ENCODE measurements at regions of chr9 and their contacts with region 1.

Region 1: DNA sequence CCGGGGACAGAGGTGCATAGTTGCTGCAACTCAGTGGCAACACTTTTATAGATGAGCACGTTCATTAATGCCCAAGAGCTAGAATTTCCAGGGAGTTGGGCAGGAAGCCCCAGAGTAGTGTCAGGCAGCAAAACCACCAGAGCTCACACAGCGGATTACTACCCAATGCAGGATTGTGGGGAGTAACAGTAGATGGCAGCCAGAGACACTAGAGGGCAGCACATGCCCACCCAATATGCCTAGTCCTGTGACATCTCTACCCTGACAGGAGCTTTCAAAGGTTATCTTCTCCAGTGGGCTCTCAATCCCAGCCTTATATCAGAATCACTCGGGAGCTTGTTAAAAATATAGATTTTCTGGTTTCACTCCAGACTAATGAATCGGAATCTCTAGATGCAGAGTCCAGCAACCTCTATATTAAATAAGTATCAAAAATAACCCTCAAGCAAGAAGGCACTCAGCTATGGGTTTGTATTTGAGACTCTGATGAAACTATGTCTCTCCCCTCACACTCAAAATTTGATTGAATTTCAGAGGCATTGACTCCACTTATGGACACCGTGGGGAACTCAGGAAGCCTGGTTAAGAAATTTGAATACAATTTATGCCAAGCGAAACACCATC is 58.4 kb upstream of the PHF24 start:
- DNase-seq: peak; percentile 76 to 79
- H3K4me3 ChIP-seq: no peak overlapping the region
- H3K27ac ChIP-seq: no peak overlapping the region
- H3K4me1 ChIP-seq: no peaks in the 10 kb centered on the region
- H3K27me3 ChIP-seq: no peaks in the 10 kb centered on the region
- CTCF ChIP-seq: peak; percentile 26 to 85 (median 75)
- POLR2A ChIP-seq: no peak

Region 2: GRCh38 chr9:34463098-34463900 is 436.3 kb before region 1 on chr9:
- intact Hi-C with region 1: no loop called
- DNase-seq: no peak
- H3K4me3 ChIP-seq: no peak overlapping the region
- H3K27ac ChIP-seq: no peak overlapping the region
- H3K4me1 ChIP-seq: peaks cover 0 to 3% of the 10 kb centered on the region in 2 donors
- H3K27me3 ChIP-seq: no peaks in the 10 kb centered on the region
- CTCF ChIP-seq: no peak
- POLR2A ChIP-seq: no peak

Region 3: DNA sequence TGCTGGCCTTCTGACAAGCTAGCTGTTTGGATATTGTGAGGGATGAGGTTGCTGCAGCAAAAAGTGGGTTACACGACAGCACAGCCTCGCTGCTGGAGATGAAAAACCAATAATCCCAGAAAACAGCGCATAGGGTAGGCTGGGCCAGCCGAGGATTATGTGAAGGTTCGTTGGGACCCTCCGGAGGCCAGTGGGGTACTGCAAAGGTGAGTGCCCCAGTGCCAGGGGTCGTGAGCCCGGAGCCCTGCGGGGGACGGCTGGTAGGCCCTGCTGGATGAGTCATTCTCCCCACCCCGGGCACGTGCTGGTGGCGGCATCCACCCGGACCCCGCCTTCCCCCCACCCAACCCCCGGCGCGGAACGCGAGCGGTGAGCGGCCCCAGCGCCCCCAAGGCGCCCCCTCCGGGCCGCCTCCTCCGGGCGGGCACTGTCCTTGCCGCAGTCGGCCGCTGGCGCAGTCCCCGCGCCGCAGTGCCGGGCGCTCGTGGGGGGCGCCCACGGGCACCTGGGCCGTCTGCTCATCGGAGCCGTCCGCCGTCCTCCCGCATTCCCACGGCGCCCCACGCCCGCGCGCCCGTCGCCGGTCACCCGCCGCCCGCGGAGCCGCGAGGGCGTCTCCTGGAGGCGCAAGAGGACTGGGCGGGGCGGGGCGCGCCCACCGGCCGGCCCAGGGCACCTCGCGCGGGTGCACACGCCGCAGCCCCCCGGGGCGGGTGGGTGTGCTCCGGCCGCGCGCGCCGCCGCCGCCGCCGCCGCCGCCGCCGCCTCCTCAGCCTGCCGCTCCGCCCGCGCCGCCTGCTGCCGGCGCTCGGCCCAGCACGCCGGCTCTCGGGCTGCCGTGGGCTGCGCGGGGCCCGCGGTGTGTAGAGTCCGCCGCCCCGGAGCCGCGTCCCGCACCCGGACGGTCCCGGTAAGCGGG is 58.1 kb after region 1 on chr9 and contains the start of gene PHF24:
- intact Hi-C with region 1: no loop called
- DNase-seq: peak; percentile 5 to 9
- H3K4me3 ChIP-seq: peak within 1 kb of the TSS in 1 of 3 donors; percentile 21
- H3K27ac ChIP-seq: no peak within 1 kb of the TSS
- H3K4me1 ChIP-seq: peaks cover 0 to 9% of the 10 kb centered on the region in 2 donors
- H3K27me3 ChIP-seq: peaks cover 3% of the 10 kb centered on the region
- CTCF ChIP-seq: peak in 2 of 6 experiments; percentile 6 to 18
- POLR2A ChIP-seq: no peak
- total RNA-seq, gene PHF24: 0.67 to 2.1 (median 1.4) TPM

Region 4: GRCh38 chr9:34989003-34989945 is 89.6 kb after region 1 on chr9 and contains the start of gene DNAJB5:
- intact Hi-C with region 1: loop called (anchors 5 kb)
- DNase-seq: peak; percentile 99 to 100
- H3K4me3 ChIP-seq: peak within 1 kb of the TSS; percentile 41 to 95 (median 48)
- H3K27ac ChIP-seq: peak within 1 kb of the TSS; percentile 43 to 91 (median 86)
- H3K4me1 ChIP-seq: peaks cover 21 to 42% of the 10 kb centered on the region in 2 donors
- H3K27me3 ChIP-seq: no peaks in the 10 kb centered on the region
- CTCF ChIP-seq: no peak
- POLR2A ChIP-seq: peak; percentile 75 to 83
- total RNA-seq, gene DNAJB5: 11.8 to 18.7 (median 16.5) TPM

Region 5: DNA sequence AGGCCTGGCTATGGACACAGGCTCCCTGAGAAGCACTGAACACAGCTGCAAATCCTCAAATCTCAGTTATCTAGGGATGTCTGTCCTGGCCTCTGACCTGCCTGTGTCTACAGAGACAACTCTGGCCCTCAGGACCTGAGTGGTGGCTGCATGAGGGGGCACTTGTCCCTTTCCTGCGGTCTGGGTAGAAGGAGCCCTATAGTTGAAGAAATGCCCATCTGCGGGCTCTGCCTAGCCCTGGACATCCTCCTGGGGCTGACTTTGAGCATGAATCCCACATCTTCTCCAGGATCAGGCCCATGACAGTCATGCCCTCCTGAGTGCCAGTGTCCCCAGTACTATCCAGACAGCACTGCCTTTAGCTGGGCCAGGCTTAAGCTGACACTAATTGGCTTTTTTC is 99.9 kb after region 1 on chr9:
- intact Hi-C with region 1: no loop called
- DNase-seq: no peak
- H3K4me3 ChIP-seq: no peak overlapping the region
- H3K27ac ChIP-seq: no peak overlapping the region
- H3K4me1 ChIP-seq: peaks cover 3 to 21% of the 10 kb centered on the region in 2 donors
- H3K27me3 ChIP-seq: no peaks in the 10 kb centered on the region
- CTCF ChIP-seq: no peak
- POLR2A ChIP-seq: no peak

Region 6: GRCh38 chr9:35470894-35471293 is 571.2 kb after region 1 on chr9:
- intact Hi-C with region 1: loop called (anchors 10 kb)
- DNase-seq: no peak
- H3K4me3 ChIP-seq: no peak overlapping the region
- H3K27ac ChIP-seq: peak overlapping the region in 1 of 3 donors; percentile 32
- H3K4me1 ChIP-seq: peaks cover 0 to 4% of the 10 kb centered on the region in 2 donors
- H3K27me3 ChIP-seq: no peaks in the 10 kb centered on the region
- CTCF ChIP-seq: no peak
- POLR2A ChIP-seq: no peak

Measured in thyroid gland (tissue), 4 donors.